Aorta (tissue), 5 donors: ENCODE measurements at regions of chr6 and their contacts with region 1.

Region 1: GRCh38 chr6:127554435-127555006 is 22.5 kb upstream of the C6orf58 start:
- DNase-seq: no peak
- ATAC-seq: no peak
- H3K4me3 ChIP-seq: no peak overlapping the region
- H3K27ac ChIP-seq: no peak overlapping the region
- H3K4me1 ChIP-seq: peaks cover 0 to 2% of the 10 kb centered on the region in 2 donors
- H3K27me3 ChIP-seq: no peaks in the 10 kb centered on the region

Region 2: DNA sequence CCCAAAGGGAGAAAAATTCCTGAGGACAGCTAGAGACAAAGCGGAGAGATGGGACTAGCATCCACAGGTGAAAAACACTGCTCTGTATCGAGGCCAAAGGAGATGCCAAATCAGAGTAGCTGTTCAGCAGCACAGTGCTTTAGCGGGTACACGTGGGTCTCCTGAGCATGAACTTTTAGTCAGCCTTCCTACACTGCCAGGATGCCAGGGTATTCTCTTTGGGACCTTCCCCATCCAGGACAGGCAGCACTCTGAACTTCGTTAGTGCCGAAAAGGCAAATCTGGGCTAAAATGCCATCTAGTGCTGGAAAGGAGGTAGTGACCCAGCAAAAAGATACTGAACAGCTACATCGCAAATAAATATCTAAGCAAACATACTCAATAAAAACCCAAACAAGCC is 87.4 kb after region 1 on chr6:
- intact Hi-C with region 1: loop called in 1 of 2 experiments (anchors 10 kb)
- DNase-seq: no peak
- ATAC-seq: no peak
- H3K4me3 ChIP-seq: no peak overlapping the region
- H3K27ac ChIP-seq: no peak overlapping the region
- H3K4me1 ChIP-seq: no peaks in the 10 kb centered on the region
- H3K27me3 ChIP-seq: no peaks in the 10 kb centered on the region